Spleen (tissue), 13 donors: ENCODE measurements at regions of chr1 and their contacts with region 1.

Region 1: DNA sequence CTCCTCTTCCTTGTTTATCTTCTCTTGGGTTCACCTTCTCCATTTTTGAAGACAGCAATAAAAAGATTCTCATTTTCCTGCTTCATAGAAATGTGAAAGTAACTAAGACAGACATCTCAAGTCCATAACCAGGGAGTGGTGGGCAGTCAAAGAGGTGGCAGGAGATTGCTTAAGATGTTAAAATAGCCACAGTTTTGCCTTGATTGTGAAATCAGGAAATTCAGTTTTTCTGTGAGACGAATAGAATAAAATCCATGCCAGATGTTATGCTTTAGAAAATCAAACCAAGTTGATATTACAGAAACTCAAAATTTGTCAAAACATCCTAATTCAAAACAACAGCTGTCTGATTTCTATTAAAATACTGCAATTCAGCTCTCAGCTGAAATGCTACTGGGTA is 57.2 kb downstream of the TNN start:
- DNase-seq: no peak
- H3K4me3 ChIP-seq: no peak overlapping the region
- H3K27ac ChIP-seq: peak overlapping the region in 6 of 8 donors; percentile 24 to 70 (median 56)
- H3K4me1 ChIP-seq: peaks cover 0 to 38% (median 15%) of the 10 kb centered on the region in 6 donors
- H3K27me3 ChIP-seq: no peaks in the 10 kb centered on the region
- CTCF ChIP-seq: no peak
- POLR2A ChIP-seq: no peak

Region 2: GRCh38 chr1:175035865-175036264 is 89.0 kb before region 1 on chr1:
- intact Hi-C with region 1: loop called (anchors 2 kb)
- DNase-seq: no peak
- H3K4me3 ChIP-seq: no peak overlapping the region
- H3K27ac ChIP-seq: no peak overlapping the region
- H3K4me1 ChIP-seq: no peaks in the 10 kb centered on the region
- H3K27me3 ChIP-seq: no peaks in the 10 kb centered on the region
- CTCF ChIP-seq: no peak
- POLR2A ChIP-seq: no peak